ENCODE measurements at regions of chr1 and their contacts with region 1.

Region 1: GRCh38 chr1:150629115-150629928 is at the start of gene ENSA:
- DNase-seq: peak; percentile 100
- ATAC-seq: peak; percentile 94
- H3K4me3 ChIP-seq: peak within 1 kb of the TSS; percentile 79
- H3K27ac ChIP-seq: peak within 1 kb of the TSS; percentile 86
- H3K4me1 ChIP-seq: peaks cover 34% of the 10 kb centered on the region
- H3K27me3 ChIP-seq: no peaks in the 10 kb centered on the region
- CTCF ChIP-seq: no peak
- total RNA-seq, gene ENSA: 194 and 232 TPM in 2 replicates

Region 2: DNA sequence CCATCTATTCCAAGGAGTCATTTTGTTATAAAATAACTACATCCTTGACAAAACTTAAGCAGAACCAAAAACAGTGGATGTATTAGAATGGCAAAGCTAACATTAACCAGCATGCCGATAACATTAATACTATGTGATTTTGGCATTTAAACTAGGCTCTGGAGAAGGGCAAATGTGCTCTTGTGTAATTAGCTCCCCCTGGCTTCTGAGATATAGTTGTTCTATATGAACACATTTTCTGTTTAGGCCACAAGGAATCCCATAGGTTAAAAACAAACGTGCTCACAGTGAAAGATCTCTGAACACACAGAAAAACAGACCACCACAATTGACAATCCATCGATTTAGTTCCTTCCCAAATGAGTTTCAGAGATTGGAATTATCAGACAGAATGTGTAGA is 199.5 kb before region 1 on chr1:
- CTCF ChIA-PET with region 1: no interaction called
- POLR2A ChIA-PET with region 1: no interaction called
- intact Hi-C with region 1: no loop called
- DNase-seq: peak; percentile 49
- ATAC-seq: peak; percentile 68
- H3K4me3 ChIP-seq: no peak overlapping the region
- H3K27ac ChIP-seq: no peak overlapping the region
- H3K4me1 ChIP-seq: no peaks in the 10 kb centered on the region
- H3K27me3 ChIP-seq: no peaks in the 10 kb centered on the region
- CTCF ChIP-seq: peak; percentile 65

Region 3: GRCh38 chr1:150572918-150573647 is 56.2 kb before region 1 on chr1:
- CTCF ChIA-PET with region 1: no interaction called
- POLR2A ChIA-PET with region 1: interaction called, 10 read pairs
- intact Hi-C with region 1: no loop called
- DNase-seq: no peak
- ATAC-seq: no peak
- H3K4me3 ChIP-seq: no peak overlapping the region
- H3K27ac ChIP-seq: 0 out of 2 replicates have a peak overlapping the region, but pooled peaks have one; percentile 0
- H3K4me1 ChIP-seq: peaks cover 50% of the 10 kb centered on the region
- H3K27me3 ChIP-seq: no peaks in the 10 kb centered on the region
- CTCF ChIP-seq: no peak

Region 4: DNA sequence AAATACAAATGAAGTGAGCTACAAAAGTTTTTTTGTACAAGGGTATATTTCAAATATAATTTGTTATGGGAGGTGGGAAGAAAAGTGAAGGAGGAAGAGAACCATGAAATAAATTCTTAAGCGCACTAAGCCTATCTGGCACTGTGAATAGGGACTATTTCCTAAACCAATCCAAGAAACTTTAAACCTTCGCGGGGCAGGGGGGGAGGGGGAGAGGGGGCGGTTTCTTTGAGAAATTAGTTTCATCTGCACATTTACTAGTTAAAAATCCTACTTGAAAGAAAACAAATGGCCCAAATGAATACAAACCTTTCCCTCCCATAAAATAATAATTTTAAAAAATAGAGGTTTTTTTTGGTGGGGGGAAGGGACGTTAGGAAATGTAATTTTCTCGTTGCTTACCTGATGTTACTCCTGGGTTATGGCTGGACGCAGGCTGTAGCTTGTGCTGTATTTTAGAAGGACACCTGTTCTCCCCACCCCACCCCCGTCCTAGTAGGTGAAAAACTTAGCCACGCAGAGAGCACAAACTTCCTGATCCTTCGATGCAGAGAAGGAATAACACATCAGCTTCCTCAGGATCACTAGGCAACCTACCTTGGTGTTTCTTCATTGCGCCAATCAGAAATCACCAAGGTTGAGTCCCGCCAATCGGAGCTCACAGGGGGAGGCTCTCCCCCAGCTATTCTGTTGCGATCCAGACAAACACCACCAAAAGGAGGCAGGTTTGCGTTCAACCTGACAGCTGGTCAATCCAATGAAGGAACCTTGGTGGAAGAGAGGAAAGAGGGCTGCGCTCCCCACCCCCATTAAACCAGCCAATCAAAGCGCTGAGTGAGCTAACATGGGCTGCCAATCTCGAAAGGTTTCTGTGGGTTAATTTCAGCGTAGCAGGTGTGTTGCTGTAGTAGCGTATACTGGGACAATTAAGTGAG is 67.5 kb after region 1 on chr1 and contains the start of gene GOLPH3L:
- CTCF ChIA-PET with region 1: interaction called, 5 read pairs
- POLR2A ChIA-PET with region 1: interaction called, 9 read pairs
- intact Hi-C with region 1: loop called (anchors 2 kb)
- DNase-seq: peak; percentile 99
- ATAC-seq: peak; percentile 96
- H3K4me3 ChIP-seq: peak within 1 kb of the TSS; percentile 78
- H3K27ac ChIP-seq: 0 out of 2 replicates have a peak within 1 kb of the TSS, but pooled peaks have one; percentile 19
- H3K4me1 ChIP-seq: peaks cover 28% of the 10 kb centered on the region
- H3K27me3 ChIP-seq: no peaks in the 10 kb centered on the region
- CTCF ChIP-seq: no peak
- total RNA-seq, gene GOLPH3L: 9.6 and 15.6 TPM in 2 replicates

Region 5: GRCh38 chr1:150961799-150962198 is 332.5 kb after region 1 on chr1:
- CTCF ChIA-PET with region 1: no interaction called
- POLR2A ChIA-PET with region 1: interaction called, 15 read pairs
- intact Hi-C with region 1: no loop called
- DNase-seq: no peak
- ATAC-seq: no peak
- H3K4me3 ChIP-seq: no peak overlapping the region
- H3K27ac ChIP-seq: no peak overlapping the region
- H3K4me1 ChIP-seq: no peaks in the 10 kb centered on the region
- H3K27me3 ChIP-seq: no peaks in the 10 kb centered on the region
- CTCF ChIP-seq: no peak

Region 6: DNA sequence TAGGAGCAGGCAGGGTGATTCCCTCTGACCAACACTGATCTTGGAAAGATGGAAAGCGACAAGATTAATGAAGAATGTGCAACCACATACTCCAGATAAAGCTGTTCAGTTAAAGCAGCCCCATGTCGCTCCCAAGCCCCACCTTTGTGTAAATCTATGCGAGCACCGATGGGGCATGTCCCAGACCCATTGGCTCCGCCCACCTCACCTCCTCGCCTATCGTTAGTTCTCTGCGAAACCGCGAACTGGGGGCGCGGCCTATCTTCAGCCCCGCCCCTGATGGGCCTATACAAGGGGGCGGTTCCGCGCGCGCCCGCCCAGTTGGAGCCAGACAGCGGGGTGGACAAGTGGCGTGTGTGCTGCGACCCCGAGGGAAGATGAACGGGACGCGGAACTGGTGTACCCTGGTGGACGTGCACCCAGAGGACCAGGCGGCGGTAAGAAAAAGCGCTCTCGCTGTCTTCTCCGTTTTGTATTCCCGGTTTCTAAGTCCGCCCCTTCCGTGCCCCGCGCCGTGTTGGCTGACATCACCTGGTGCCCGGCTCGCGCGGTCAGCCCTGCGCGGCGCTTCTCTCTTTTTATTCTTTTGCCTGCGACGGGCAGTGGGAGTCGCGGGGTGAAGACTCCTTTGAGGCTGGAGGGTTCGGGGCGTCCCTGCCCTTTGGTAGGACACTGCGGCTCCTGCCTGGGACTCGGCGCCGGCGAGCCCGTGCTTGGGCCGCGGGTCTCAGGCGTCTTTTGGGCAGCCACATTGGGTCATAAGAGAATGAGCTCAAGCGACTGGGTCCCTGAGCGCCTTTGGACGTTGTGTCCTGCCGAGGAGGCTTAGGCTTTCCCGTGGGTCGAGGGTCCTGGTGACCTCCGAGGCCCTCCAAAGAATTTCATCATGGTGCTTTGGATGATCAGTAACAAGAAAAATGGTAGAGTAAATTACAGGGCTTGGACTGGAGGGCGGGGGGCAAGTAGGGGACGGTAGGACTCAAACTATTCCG is 911.0 kb after region 1 on chr1 and contains the start of gene TUFT1:
- CTCF ChIA-PET with region 1: interaction called, 15 read pairs
- POLR2A ChIA-PET with region 1: no interaction called
- intact Hi-C with region 1: no loop called
- DNase-seq: peak; percentile 97
- ATAC-seq: peak; percentile 77
- H3K4me3 ChIP-seq: peak within 1 kb of the TSS; percentile 81
- H3K27ac ChIP-seq: peak within 1 kb of the TSS; percentile 86
- H3K4me1 ChIP-seq: peaks cover 61% of the 10 kb centered on the region
- H3K27me3 ChIP-seq: no peaks in the 10 kb centered on the region
- CTCF ChIP-seq: no peak
- total RNA-seq, gene TUFT1: 33.9 and 46.9 TPM in 2 replicates